GM12878 (cell line): ENCODE measurements at regions of chr10 and their contacts with region 1.

Region 1: DNA sequence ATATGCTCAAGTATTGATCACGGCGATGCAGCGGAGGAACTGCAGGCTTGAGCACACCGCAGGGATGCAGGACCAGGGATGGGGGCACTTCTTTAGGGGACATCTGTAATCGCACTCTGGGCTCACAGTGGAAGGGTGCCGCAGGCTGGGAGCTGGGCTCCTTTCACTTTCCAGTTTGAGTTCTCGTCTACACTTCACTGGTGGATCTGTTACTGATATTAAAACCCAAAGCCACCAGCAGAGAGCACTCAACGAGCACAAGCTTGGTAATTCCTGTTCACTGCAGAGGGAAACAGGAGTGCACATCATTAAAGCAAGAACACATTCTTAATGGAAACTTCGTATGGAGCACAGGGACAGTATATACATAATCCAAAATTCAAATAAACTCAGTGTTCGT is 91.3 kb downstream of the PARD3 start:
- DNase-seq: no peak
- ATAC-seq: peak; percentile 77
- H3K4me3 ChIP-seq: no peak overlapping the region
- H3K27ac ChIP-seq: no peak overlapping the region
- H3K4me1 ChIP-seq: no peaks in the 10 kb centered on the region
- H3K27me3 ChIP-seq: no peaks in the 10 kb centered on the region
- CTCF ChIP-seq: peak; percentile 39 to 70 (median 39); a peak in 4 of 6 replicates
- EP300 ChIP-seq: no peak
- POLR2A ChIP-seq: no peak
- RAD21 ChIP-seq: peak; percentile 71

Region 2: DNA sequence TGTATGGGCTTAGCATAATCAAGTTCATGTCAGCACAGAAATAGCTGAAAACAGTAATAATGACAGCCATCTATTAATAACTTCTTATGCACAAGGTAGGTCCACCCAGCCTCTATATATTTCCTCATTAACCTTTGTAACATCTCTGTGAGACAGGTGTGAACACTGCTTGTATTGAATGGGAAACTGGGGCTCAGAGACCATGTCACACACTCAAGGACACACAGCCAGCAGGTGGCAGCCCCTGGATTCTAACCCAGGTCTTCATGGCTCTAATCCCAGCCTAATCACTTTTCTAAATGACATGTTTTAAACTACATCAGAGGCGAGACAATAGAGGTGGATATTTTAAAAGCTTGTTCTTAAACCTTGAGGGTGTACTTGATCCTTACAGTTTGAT is 500.1 kb before region 1 on chr10:
- CTCF ChIA-PET with region 1: no interaction called
- POLR2A ChIA-PET with region 1: no interaction called
- RAD21 ChIA-PET with region 1: no interaction called
- SMC1A ChIA-PET with region 1: no interaction called
- in situ Hi-C with region 1: no loop called
- intact Hi-C with region 1: no loop called
- DNase-seq: no peak
- ATAC-seq: peak; percentile 53
- H3K4me3 ChIP-seq: no peak overlapping the region
- H3K27ac ChIP-seq: no peak overlapping the region
- H3K4me1 ChIP-seq: no peaks in the 10 kb centered on the region
- H3K27me3 ChIP-seq: no peaks in the 10 kb centered on the region; a peak in 1 of 4 replicates
- CTCF ChIP-seq: no peak; a peak in 1 of 6 replicates
- EP300 ChIP-seq: no peak
- POLR2A ChIP-seq: no peak
- RAD21 ChIP-seq: no peak

Region 3: GRCh38 chr10:34689053-34689452 is 34.7 kb before region 1 on chr10:
- CTCF ChIA-PET with region 1: interaction called, 18 read pairs
- POLR2A ChIA-PET with region 1: no interaction called
- RAD21 ChIA-PET with region 1: interaction called, 10 read pairs
- SMC1A ChIA-PET with region 1: interaction called, 16 read pairs
- in situ Hi-C with region 1: no loop called
- intact Hi-C with region 1: no loop called
- DNase-seq: no peak
- ATAC-seq: no peak
- H3K4me3 ChIP-seq: no peak overlapping the region
- H3K27ac ChIP-seq: no peak overlapping the region
- H3K4me1 ChIP-seq: no peaks in the 10 kb centered on the region
- H3K27me3 ChIP-seq: no peaks in the 10 kb centered on the region
- CTCF ChIP-seq: no peak
- EP300 ChIP-seq: no peak
- POLR2A ChIP-seq: no peak
- RAD21 ChIP-seq: no peak

Region 4: GRCh38 chr10:34758447-34758996 is 34.8 kb after region 1 on chr10:
- CTCF ChIA-PET with region 1: interaction called, 30 read pairs
- POLR2A ChIA-PET with region 1: interaction called, 12 read pairs
- RAD21 ChIA-PET with region 1: interaction called, 48 read pairs
- SMC1A ChIA-PET with region 1: interaction called, 52 read pairs
- in situ Hi-C with region 1: no loop called
- intact Hi-C with region 1: no loop called
- DNase-seq: peak; percentile 34
- ATAC-seq: peak; percentile 76
- H3K4me3 ChIP-seq: no peak overlapping the region
- H3K27ac ChIP-seq: no peak overlapping the region
- H3K4me1 ChIP-seq: no peaks in the 10 kb centered on the region
- H3K27me3 ChIP-seq: no peaks in the 10 kb centered on the region
- CTCF ChIP-seq: no peak
- EP300 ChIP-seq: no peak
- POLR2A ChIP-seq: no peak
- RAD21 ChIP-seq: no peak

Region 5: DNA sequence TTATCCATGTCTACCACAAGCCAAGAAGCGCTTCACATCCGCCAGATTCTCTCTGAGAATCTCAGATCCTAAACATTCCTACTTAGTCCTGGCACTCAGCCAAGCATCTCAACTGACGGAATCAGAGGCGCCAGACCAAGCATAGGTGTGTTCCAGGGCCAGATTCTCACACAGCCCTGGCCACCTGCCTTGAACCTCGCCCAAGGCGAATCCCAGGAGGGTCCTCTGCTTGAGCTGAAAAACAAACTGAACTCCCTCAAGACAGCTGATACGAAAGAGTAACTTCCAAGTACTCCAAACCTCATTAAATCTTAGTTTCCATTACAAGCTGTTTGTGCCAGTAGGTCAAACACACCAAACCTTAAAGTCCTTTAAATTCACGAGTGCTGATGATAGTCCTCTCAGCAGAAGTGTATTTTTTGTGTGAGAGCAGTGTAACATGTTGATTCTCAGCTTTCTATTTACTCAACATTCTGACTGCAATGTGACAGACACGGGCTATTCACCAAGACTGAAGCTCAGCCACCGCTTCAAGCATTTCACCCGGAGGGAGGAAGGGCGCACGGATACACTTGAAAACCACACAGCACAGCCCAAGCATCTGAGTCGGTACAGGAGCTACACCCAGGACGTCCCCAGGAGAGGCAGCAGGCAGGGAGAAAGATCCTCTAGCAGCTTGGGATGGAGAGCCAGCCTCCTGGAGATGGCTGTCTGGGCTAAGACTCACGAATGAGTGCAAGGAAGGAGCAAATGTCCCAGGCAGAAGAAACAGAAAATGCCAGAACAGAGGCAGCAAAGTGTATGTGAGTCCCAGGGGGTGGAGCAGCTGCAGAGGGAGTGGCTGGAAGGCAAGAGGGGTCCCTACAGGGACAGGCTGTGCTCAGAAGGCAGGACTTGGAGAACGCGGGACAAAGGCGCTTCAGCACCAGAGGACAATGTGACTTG is 85.3 kb after region 1 on chr10:
- CTCF ChIA-PET with region 1: interaction called, 17 read pairs
- POLR2A ChIA-PET with region 1: interaction called, 7 read pairs
- RAD21 ChIA-PET with region 1: interaction called, 142 read pairs
- SMC1A ChIA-PET with region 1: interaction called, 107 read pairs
- in situ Hi-C with region 1: no loop called
- intact Hi-C with region 1: loop called (anchors 5 kb)
- DNase-seq: no peak
- ATAC-seq: peak; percentile 67
- H3K4me3 ChIP-seq: no peak overlapping the region; the same call in 1 of the 2 replicates
- H3K27ac ChIP-seq: no peak overlapping the region
- H3K4me1 ChIP-seq: no peaks in the 10 kb centered on the region
- H3K27me3 ChIP-seq: peaks cover 0 to 8% of the 10 kb centered on the region in 2 experiments; a peak in 3 of 4 replicates
- CTCF ChIP-seq: no peak
- EP300 ChIP-seq: no peak
- POLR2A ChIP-seq: no peak
- RAD21 ChIP-seq: no peak

Region 6: DNA sequence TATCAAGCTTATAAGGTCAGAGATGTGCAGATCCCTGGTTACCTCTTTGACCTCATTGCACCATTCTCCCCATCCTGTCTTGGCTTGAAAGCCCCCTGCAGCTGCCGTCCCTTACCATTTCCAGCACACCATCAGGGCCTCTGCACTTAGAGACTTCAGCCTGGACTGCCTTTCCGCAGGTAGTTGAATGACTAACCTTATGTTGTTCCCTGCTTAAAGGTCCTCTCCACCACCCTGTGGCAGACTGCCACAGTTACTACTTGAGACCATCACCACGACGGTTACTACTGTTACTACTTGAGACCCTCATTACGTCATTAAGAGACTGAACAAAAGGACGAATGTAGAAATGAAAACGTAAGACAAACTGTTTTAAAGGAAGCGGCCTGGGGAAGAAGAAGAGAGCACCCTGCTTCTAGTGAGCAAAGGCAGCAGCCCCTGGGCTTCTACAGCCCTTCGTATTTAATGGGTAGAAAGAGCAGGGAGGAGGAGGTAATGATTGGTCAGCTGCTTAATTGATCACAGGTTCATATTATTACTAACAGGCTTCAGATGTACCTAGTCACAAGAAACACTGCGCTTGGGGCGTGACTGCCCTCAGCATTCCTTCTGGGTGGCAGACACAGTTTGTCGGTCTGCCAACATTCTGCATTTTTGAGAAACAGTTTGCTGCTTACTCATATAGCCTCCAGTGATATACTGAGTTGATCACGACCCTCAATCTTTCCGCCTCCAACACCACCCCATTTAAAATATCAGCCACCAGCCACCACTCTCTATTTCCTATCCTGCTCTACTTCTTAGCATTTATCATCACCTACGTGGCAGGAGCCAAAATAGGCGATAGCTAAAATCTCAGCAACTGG is 165.5 kb after region 1 on chr10:
- CTCF ChIA-PET with region 1: interaction called, 11 read pairs
- POLR2A ChIA-PET with region 1: no interaction called
- RAD21 ChIA-PET with region 1: interaction called, 4 read pairs
- SMC1A ChIA-PET with region 1: interaction called, 4 read pairs
- in situ Hi-C with region 1: no loop called
- intact Hi-C with region 1: no loop called
- DNase-seq: no peak
- ATAC-seq: no peak
- H3K4me3 ChIP-seq: no peak overlapping the region
- H3K27ac ChIP-seq: no peak overlapping the region
- H3K4me1 ChIP-seq: no peaks in the 10 kb centered on the region
- H3K27me3 ChIP-seq: no peaks in the 10 kb centered on the region
- CTCF ChIP-seq: no peak
- EP300 ChIP-seq: no peak
- POLR2A ChIP-seq: no peak
- RAD21 ChIP-seq: no peak

Region 7: GRCh38 chr10:34985823-34986222 is 262.1 kb after region 1 on chr10:
- CTCF ChIA-PET with region 1: no interaction called
- POLR2A ChIA-PET with region 1: no interaction called
- RAD21 ChIA-PET with region 1: interaction called, 14 read pairs
- SMC1A ChIA-PET with region 1: no interaction called
- in situ Hi-C with region 1: no loop called
- intact Hi-C with region 1: no loop called
- DNase-seq: no peak
- ATAC-seq: peak; percentile 56
- H3K4me3 ChIP-seq: no peak overlapping the region
- H3K27ac ChIP-seq: no peak overlapping the region
- H3K4me1 ChIP-seq: no peaks in the 10 kb centered on the region
- H3K27me3 ChIP-seq: no peaks in the 10 kb centered on the region
- CTCF ChIP-seq: 0 out of 6 replicates have a peak, but pooled peaks of 1 of the 3 experiments have one; percentile 5
- EP300 ChIP-seq: no peak
- POLR2A ChIP-seq: no peak
- RAD21 ChIP-seq: no peak